PC-3 (cell line): ENCODE measurements at regions of chr6 and their contacts with region 1.

Region 1: GRCh38 chr6:20401205-20402091 is at the start of gene E2F3:
- DNase-seq: peak; percentile 99
- ATAC-seq: peak; percentile 81
- H3K4me3 ChIP-seq: peak within 1 kb of the TSS; percentile 90
- H3K27ac ChIP-seq: peak within 1 kb of the TSS; percentile 96
- H3K4me1 ChIP-seq: peaks cover 15% of the 10 kb centered on the region
- H3K27me3 ChIP-seq: peaks cover 3% of the 10 kb centered on the region; the same call in 1 of the 2 replicates
- CTCF ChIP-seq: no peak
- total RNA-seq, gene E2F3: 8.8 and 10.8 TPM in 2 replicates

Region 2: GRCh38 chr6:20291764-20292580 is 109.5 kb before region 1 on chr6:
- CTCF ChIA-PET with region 1: interaction called, 4 read pairs
- POLR2A ChIA-PET with region 1: no interaction called
- intact Hi-C with region 1: loop called (anchors 5 kb)
- DNase-seq: peak; percentile 93
- ATAC-seq: peak; percentile 92
- H3K4me3 ChIP-seq: no peak overlapping the region
- H3K27ac ChIP-seq: no peak overlapping the region
- H3K4me1 ChIP-seq: peaks cover 5% of the 10 kb centered on the region
- H3K27me3 ChIP-seq: 0 out of 2 replicates have a peak, but pooled peaks cover 3% of the 10 kb centered on the region
- CTCF ChIP-seq: peak; percentile 94

Region 3: DNA sequence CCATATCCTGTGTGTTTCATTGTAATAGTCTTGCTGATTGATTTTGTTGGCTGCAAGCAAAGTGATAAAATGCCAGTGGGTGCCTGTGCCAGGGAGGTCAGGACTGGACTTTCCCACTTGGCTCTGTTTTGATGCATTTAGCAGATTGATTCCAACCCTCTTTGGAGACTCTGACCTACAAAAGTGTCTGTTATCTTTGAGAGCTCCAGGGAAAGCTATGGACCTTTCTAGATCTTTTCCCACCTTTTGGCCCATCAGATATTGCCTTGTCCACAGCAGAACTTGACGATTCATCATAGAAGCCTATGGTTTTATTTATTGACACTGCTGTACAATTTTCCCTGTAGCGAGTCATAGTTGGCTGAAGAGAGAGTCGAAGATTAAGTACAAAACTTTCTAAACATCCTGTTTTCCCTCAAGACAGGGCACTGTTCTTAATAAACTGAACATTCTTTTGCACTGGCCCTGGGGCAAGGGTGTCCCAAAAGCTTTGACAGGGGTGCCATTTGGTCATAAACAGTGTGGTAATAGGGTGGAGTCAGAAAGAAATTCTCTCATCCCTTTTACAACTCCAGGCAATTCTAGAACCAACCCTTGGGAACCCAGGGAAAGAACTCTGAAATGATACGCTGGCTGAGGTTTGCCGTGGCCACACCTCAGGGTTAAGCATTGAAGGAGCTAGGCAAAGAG is 53.9 kb after region 1 on chr6:
- CTCF ChIA-PET with region 1: no interaction called
- POLR2A ChIA-PET with region 1: no interaction called
- intact Hi-C with region 1: loop called (anchors 10 kb)
- DNase-seq: peak; percentile 76
- ATAC-seq: peak; percentile 88
- H3K4me3 ChIP-seq: no peak overlapping the region
- H3K27ac ChIP-seq: peak overlapping the region; percentile 71
- H3K4me1 ChIP-seq: peaks cover 23% of the 10 kb centered on the region
- H3K27me3 ChIP-seq: no peaks in the 10 kb centered on the region
- CTCF ChIP-seq: no peak